PC-9 (cell line): ENCODE measurements at regions of chrX and their contacts with region 1.

Region 1: GRCh38 chrX:118652718-118653117 is 74.7 kb upstream of the IL13RA1 start:
- DNase-seq: peak; percentile 21 to 74
- H3K4me3 ChIP-seq: no peak overlapping the region
- H3K27ac ChIP-seq: peak overlapping the region; percentile 16; the same call in 1 of the 2 replicates
- H3K4me1 ChIP-seq: peaks cover 24% of the 10 kb centered on the region
- H3K27me3 ChIP-seq: no peaks in the 10 kb centered on the region
- CTCF ChIP-seq: no peak

Region 2: GRCh38 chrX:118726887-118727739 is 74.4 kb after region 1 on chrX and contains the start of gene IL13RA1:
- CTCF ChIA-PET with region 1: no interaction called
- POLR2A ChIA-PET with region 1: interaction called, 4 read pairs
- intact Hi-C with region 1: loop called (anchors 5 kb)
- DNase-seq: peak; percentile 86 to 95
- H3K4me3 ChIP-seq: peak within 1 kb of the TSS; percentile 90
- H3K27ac ChIP-seq: peak within 1 kb of the TSS; percentile 95
- H3K4me1 ChIP-seq: peaks cover 69% of the 10 kb centered on the region
- H3K27me3 ChIP-seq: no peaks in the 10 kb centered on the region
- CTCF ChIP-seq: no peak
- total RNA-seq, gene IL13RA1: 85.3 and 106 TPM in 2 replicates